CD4-positive, alpha-beta T cell (primary cell): ENCODE measurements at regions of chr3 and their contacts with region 1.

Region 1: GRCh38 chr3:31232055-31233025 is 300.4 kb upstream of the STT3B start:
- DNase-seq: peak in 3 of 14 experiments; percentile 25 to 57 (median 48)
- ATAC-seq: no peak
- H3K4me3 ChIP-seq: no peak overlapping the region
- H3K4me3 Mint-ChIP-seq: peak overlapping the region; percentile 36
- H3K27ac ChIP-seq: peak overlapping the region in 1 of 2 donors; percentile 52
- H3K27ac Mint-ChIP-seq: peak overlapping the region; percentile 75
- H3K4me1 ChIP-seq: peaks cover 74% of the 10 kb centered on the region
- H3K4me1 Mint-ChIP-seq: peaks cover 81% of the 10 kb centered on the region
- H3K27me3 ChIP-seq: no peaks in the 10 kb centered on the region
- H3K27me3 Mint-ChIP-seq: no peaks in the 10 kb centered on the region
- CTCF ChIP-seq: no peak

Region 2: GRCh38 chr3:31035681-31036080 is 196.7 kb before region 1 on chr3:
- CTCF ChIA-PET with region 1: no interaction called
- POLR2A ChIA-PET with region 1: no interaction called
- intact Hi-C with region 1: no loop called
- DNase-seq: no peak
- ATAC-seq: no peak
- H3K4me3 ChIP-seq: no peak overlapping the region
- H3K4me3 Mint-ChIP-seq: no peak overlapping the region
- H3K27ac ChIP-seq: no peak overlapping the region
- H3K27ac Mint-ChIP-seq: no peak overlapping the region
- H3K4me1 ChIP-seq: no peaks in the 10 kb centered on the region
- H3K4me1 Mint-ChIP-seq: no peaks in the 10 kb centered on the region
- H3K27me3 ChIP-seq: no peaks in the 10 kb centered on the region
- H3K27me3 Mint-ChIP-seq: no peaks in the 10 kb centered on the region
- CTCF ChIP-seq: no peak

Region 3: DNA sequence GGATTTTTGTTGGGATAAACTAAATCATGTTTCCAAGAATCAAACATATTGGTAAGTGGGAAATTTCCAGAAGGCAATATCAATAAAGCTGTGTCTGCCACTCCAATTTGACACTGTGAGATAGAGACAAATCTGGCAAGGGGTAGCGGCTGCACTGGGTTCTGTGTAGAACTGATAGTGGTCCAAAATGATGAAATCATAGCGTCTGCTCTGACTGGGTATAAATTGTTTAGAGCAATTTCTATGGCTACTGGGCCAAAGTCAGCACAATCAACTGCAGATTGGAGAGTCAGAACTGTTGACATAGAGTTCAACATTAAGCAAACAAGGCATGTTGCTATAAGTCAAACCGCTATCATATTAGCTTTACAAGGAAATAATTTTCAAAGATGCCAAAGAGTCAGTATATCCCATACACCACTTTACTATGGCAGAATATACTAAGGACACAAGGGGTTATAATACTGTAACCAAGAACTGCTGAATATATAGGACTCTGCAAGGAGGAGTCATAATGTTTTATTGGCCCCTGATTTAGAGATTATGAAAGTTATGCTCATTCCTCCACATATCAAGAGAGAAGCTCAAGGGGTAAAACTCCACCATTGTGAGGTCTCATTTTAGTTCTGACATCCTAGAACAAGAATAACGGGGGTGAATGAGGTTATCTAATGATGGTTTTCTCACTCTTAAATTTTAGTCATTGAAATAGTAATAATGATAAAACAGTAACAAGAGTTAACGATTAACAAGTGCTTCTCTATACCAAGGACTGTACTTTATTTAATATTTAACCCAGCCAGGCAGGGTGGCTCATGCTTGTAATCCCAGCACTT is 28.2 kb before region 1 on chr3:
- CTCF ChIA-PET with region 1: no interaction called
- POLR2A ChIA-PET with region 1: interaction called, 3 read pairs
- intact Hi-C with region 1: loop called in 1 of 2 experiments (anchors 5 kb)
- DNase-seq: no peak
- ATAC-seq: no peak
- H3K4me3 ChIP-seq: no peak overlapping the region
- H3K4me3 Mint-ChIP-seq: no peak overlapping the region
- H3K27ac ChIP-seq: no peak overlapping the region
- H3K27ac Mint-ChIP-seq: no peak overlapping the region
- H3K4me1 ChIP-seq: no peaks in the 10 kb centered on the region
- H3K4me1 Mint-ChIP-seq: peaks cover 3% of the 10 kb centered on the region
- H3K27me3 ChIP-seq: no peaks in the 10 kb centered on the region
- H3K27me3 Mint-ChIP-seq: no peaks in the 10 kb centered on the region
- CTCF ChIP-seq: no peak

Region 4: DNA sequence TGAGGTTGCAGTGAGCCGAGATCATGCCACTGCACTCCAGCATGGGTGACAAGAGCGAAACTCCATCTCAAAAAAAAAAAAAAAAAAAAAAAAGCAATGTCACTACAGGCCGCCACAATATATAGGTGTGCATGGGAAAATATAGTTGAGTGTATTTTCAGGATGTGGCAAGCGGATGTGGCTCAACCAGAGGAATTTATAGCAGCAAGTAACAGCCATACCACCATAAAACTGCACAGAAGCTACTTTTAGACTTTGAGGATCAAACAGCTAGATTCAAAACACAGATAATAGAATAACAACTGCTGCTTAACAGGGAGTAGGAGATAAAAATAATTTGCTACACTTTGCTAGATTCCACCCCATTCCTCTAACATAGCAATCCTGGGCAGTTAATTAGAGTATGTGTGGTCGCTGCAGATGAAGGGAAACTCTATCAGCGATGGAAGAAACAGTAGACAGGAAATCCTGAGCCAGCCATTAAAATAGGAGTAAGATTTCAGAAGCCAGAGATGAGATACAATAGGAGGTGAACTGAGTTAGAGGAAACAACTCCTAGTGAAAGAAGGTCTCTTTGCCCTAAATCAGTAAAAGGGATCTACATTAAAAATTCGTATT is 18.4 kb before region 1 on chr3:
- CTCF ChIA-PET with region 1: interaction called, 4 read pairs
- POLR2A ChIA-PET with region 1: interaction called, 104 read pairs
- intact Hi-C with region 1: no loop called
- DNase-seq: peak in 8 of 14 experiments; percentile 11 to 89 (median 44)
- ATAC-seq: peak; percentile 75
- H3K4me3 ChIP-seq: no peak overlapping the region
- H3K4me3 Mint-ChIP-seq: peak overlapping the region; percentile 77
- H3K27ac ChIP-seq: peak overlapping the region in 1 of 2 donors; percentile 11
- H3K27ac Mint-ChIP-seq: peak overlapping the region; percentile 76
- H3K4me1 ChIP-seq: peaks cover 56% of the 10 kb centered on the region
- H3K4me1 Mint-ChIP-seq: peaks cover 100% of the 10 kb centered on the region
- H3K27me3 ChIP-seq: no peaks in the 10 kb centered on the region
- H3K27me3 Mint-ChIP-seq: no peaks in the 10 kb centered on the region
- CTCF ChIP-seq: no peak